ENCODE measurements at regions of chr3 and their contacts with region 1.

Region 1: GRCh38 chr3:119676771-119677640 is at the start of gene COX17:
- DNase-seq: peak; percentile 91 to 96
- ATAC-seq: peak; percentile 86 to 94 (median 91)
- H3K4me3 ChIP-seq: peak within 1 kb of the TSS; percentile 53 to 81 (median 70)
- H3K27ac ChIP-seq: peak within 1 kb of the TSS; percentile 89 to 98 (median 96)
- H3K4me1 ChIP-seq: peaks cover 6 to 45% (median 34%) of the 10 kb centered on the region in 9 donors
- H3K27me3 ChIP-seq: no peaks in the 10 kb centered on the region
- CTCF ChIP-seq: no peak
- total RNA-seq, gene COX17: 76.2 to 175 (median 107) TPM

Region 2: DNA sequence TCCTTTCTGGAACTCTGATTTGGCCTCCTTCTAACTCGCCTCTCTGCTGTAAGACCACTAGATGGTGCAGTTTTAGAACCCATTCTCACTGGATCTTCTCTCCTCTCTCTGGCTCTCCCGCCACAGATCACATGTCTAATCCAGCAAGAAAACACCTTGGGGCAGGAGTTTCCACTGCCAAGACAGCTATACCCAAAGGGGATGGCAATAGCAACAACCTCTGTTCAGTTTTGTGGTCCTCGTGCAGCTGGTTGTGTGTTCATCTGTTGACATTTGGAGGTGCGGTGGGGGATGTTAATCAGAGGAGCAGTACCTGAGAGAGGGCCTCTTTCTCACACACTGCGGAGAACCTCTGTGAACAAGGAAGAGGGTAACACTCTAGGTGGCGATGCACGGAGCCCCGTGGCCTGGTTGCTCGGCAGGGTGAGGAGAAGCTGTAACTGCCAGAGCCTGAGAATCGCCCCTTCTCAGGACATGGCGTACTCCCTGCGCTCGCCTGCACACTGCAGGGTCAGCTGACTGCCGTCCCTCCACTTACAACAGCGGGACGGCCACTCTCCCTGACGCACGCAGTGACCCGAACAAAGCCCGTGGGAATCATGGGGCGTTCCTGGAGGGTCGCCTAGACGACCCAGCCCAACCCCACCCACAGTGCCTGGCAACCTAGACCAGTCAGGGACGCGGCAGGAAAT is 531.4 kb before region 1 on chr3 and contains the start of gene TEX55:
- intact Hi-C with region 1: loop called in 1 of 10 experiments (anchors 10 kb)
- DNase-seq: peak; percentile 8 to 39
- ATAC-seq: peak in 7 of 8 donors; percentile 44 to 92 (median 78)
- H3K4me3 ChIP-seq: no peak within 1 kb of the TSS
- H3K27ac ChIP-seq: no peak within 1 kb of the TSS
- H3K4me1 ChIP-seq: no peaks in the 10 kb centered on the region
- H3K27me3 ChIP-seq: no peaks in the 10 kb centered on the region
- CTCF ChIP-seq: peak in 7 of 9 donors; percentile 45 to 64 (median 52)
- total RNA-seq, gene TEX55: not detected

Region 3: GRCh38 chr3:119279101-119279554 is 397.9 kb before region 1 on chr3:
- intact Hi-C with region 1: loop called in 3 of 10 experiments (anchors 5 to 10 kb)
- DNase-seq: peak; percentile 74 to 78
- ATAC-seq: peak; percentile 89 to 96 (median 93)
- H3K4me3 ChIP-seq: peak overlapping the region in 3 of 10 donors; percentile 2 to 20 (median 10)
- H3K27ac ChIP-seq: peak overlapping the region; percentile 74 to 94 (median 89)
- H3K4me1 ChIP-seq: peaks cover 5 to 58% (median 23%) of the 10 kb centered on the region in 9 donors
- H3K27me3 ChIP-seq: no peaks in the 10 kb centered on the region
- CTCF ChIP-seq: no peak

Region 4: GRCh38 chr3:119498186-119498987 is 178.6 kb before region 1 on chr3 and contains the start of gene TIMMDC1:
- intact Hi-C with region 1: loop called in 2 of 10 experiments (anchors 1 to 10 kb)
- DNase-seq: peak; percentile 96 to 98
- ATAC-seq: peak; percentile 99 to 100 (median 100)
- H3K4me3 ChIP-seq: peak within 1 kb of the TSS; percentile 66 to 93 (median 82)
- H3K27ac ChIP-seq: peak within 1 kb of the TSS; percentile 74 to 98 (median 96)
- H3K4me1 ChIP-seq: peaks cover 9 to 44% (median 31%) of the 10 kb centered on the region in 9 donors
- H3K27me3 ChIP-seq: no peaks in the 10 kb centered on the region
- CTCF ChIP-seq: peak in 1 of 9 donors; percentile 7
- total RNA-seq, gene TIMMDC1: 213 to 379 (median 240) TPM

Region 5: DNA sequence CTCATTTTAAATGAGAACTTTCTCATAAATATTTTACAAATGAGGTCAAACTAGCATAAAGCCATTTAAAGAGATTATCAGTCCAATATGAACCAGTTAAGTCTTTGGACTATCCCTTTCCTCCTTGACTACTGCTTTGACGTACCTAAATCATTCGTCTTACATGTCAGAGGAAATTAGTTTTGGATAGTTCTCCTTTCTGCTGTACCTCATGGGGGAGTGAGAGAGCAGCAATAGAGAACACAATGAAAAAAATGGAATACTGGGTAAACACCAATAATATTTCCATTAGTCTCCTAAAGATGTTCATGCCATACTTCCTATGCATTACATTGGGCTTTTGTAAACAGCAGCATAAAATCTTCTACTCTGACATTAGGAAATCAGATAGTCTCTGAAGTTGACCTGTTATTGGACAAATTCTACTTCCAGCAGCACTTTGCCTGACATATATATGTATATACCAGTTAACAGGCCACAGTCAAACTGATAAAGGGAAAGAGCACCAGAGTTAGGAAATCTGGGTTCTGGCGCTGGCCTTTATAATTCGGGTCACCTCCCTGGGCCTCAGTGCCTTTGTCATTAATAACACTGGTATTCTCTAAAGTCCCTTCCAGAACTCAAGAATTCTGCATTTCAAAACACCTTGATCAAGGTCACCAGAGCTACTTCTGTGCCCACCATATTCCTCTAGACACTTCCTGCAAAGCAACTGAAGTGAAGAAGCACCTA is 151.9 kb before region 1 on chr3:
- intact Hi-C with region 1: loop called in 9 of 10 experiments (anchors 2 to 10 kb)
- DNase-seq: no peak
- ATAC-seq: peak in 6 of 8 donors; percentile 20 to 73 (median 61)
- H3K4me3 ChIP-seq: no peak overlapping the region
- H3K27ac ChIP-seq: peak overlapping the region in 6 of 10 donors; percentile 18 to 50 (median 34)
- H3K4me1 ChIP-seq: peaks cover 0 to 12% (median 0%) of the 10 kb centered on the region in 9 donors
- H3K27me3 ChIP-seq: no peaks in the 10 kb centered on the region
- CTCF ChIP-seq: peak in 8 of 9 donors; percentile 31 to 74 (median 54)

Region 6: GRCh38 chr3:119579366-119580165 is 97.4 kb before region 1 on chr3 and contains the start of gene ADPRH:
- intact Hi-C with region 1: loop called in 4 of 10 experiments (anchors 2 to 10 kb)
- DNase-seq: peak; percentile 86 to 89
- ATAC-seq: peak; percentile 94 to 96 (median 95)
- H3K4me3 ChIP-seq: peak within 1 kb of the TSS; percentile 37 to 81 (median 64)
- H3K27ac ChIP-seq: peak within 1 kb of the TSS; percentile 87 to 99 (median 94)
- H3K4me1 ChIP-seq: peaks cover 0 to 25% (median 17%) of the 10 kb centered on the region in 9 donors
- H3K27me3 ChIP-seq: no peaks in the 10 kb centered on the region
- CTCF ChIP-seq: no peak
- total RNA-seq, gene ADPRH: 7.5 to 16.9 (median 12.6) TPM

Region 7: GRCh38 chr3:119657887-119658702 is 18.9 kb before region 1 on chr3:
- intact Hi-C with region 1: no loop called
- DNase-seq: no peak
- ATAC-seq: no peak
- H3K4me3 ChIP-seq: peak overlapping the region; percentile 30 to 72 (median 58)
- H3K27ac ChIP-seq: peak overlapping the region in 9 of 10 donors; percentile 43 to 98 (median 95)
- H3K4me1 ChIP-seq: peaks cover 4 to 62% (median 37%) of the 10 kb centered on the region in 9 donors
- H3K27me3 ChIP-seq: no peaks in the 10 kb centered on the region
- CTCF ChIP-seq: peak in 2 of 9 donors; percentile 6 to 8

Region 8: DNA sequence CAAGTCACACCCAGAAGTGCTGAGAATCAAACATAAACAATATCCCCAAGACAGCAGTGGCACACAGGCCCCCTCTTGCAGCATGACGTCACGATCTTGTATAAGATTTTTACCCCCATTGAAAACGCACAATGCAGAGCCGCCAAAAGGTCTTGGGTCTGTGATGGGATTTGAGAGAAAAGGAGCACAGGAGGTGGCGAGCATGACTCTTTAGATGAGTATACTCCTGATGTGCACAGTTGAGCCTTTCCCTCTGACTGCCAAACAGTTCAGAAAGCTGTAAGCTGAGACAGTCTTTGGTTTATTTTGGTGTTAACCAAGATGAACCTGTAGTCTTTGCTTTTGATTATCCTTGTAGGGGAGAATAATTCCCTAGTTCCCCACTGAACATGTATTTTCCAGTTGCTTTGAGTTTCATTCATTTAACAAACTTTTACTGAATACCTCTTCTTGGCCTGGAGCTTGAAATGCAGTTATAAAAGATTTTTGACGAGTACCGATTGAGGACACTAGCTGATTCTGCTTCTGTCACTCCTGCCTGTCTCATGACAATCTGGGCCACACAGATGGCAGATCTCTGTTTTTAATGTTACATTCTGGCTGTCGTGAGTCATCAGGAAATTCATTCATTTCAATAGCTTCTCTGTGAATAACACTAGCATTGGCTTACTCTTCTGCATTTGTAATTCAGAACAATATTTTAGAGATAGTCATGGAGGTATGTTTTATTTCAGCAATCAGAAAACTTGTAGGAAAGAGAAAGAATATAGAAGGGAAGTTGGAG is 54.7 kb after region 1 on chr3:
- intact Hi-C with region 1: no loop called
- DNase-seq: no peak
- ATAC-seq: no peak
- H3K4me3 ChIP-seq: no peak overlapping the region
- H3K27ac ChIP-seq: no peak overlapping the region
- H3K4me1 ChIP-seq: no peaks in the 10 kb centered on the region
- H3K27me3 ChIP-seq: no peaks in the 10 kb centered on the region
- CTCF ChIP-seq: no peak